PC-9 (cell line): ENCODE measurements at regions of chr5 and their contacts with region 1.

Region 1: DNA sequence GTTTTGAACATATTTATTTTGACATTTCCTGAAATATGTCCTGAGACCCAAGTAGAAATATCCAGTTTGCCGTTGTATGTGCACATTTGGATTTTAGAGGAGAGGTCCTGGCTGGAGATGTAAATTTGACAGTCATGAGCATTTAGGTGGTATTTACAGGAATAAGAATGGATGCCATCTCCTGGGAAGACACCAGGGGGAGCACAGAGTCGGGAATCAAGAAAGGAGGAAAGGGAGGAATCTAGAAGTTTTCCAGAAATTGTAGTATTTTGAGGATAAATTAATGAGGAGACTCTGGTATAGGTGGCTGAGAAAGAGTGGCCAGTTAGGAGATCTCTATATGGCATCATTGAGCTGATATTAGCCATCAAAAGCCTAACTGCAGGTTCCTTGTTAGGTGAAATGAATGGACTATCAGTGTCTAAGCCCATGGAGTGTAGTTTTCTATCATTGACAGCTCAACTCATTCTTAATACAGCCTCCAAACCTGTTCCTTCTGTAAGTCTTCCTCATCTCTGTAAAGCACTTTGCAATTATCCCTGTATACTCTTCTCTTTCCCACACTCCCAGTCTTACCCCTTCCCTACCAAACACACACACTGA is 7.2 kb downstream of the GAPT start:
- DNase-seq: peak in 1 of 2 experiments; percentile 9
- H3K4me3 ChIP-seq: no peak overlapping the region
- H3K27ac ChIP-seq: no peak overlapping the region
- H3K4me1 ChIP-seq: no peaks in the 10 kb centered on the region
- H3K27me3 ChIP-seq: no peaks in the 10 kb centered on the region
- CTCF ChIP-seq: peak; percentile 83

Region 2: GRCh38 chr5:58849921-58850667 is 351.7 kb after region 1 on chr5:
- CTCF ChIA-PET with region 1: interaction called, 3 read pairs
- POLR2A ChIA-PET with region 1: no interaction called
- intact Hi-C with region 1: loop called (anchors 1 kb)
- DNase-seq: peak; percentile 39 to 82
- H3K4me3 ChIP-seq: no peak overlapping the region
- H3K27ac ChIP-seq: no peak overlapping the region
- H3K4me1 ChIP-seq: peaks cover 12% of the 10 kb centered on the region
- H3K27me3 ChIP-seq: no peaks in the 10 kb centered on the region
- CTCF ChIP-seq: peak; percentile 75